Transverse colon (tissue), 4 donors: ENCODE measurements at regions of chr18 and their contacts with region 1.

Region 1: DNA sequence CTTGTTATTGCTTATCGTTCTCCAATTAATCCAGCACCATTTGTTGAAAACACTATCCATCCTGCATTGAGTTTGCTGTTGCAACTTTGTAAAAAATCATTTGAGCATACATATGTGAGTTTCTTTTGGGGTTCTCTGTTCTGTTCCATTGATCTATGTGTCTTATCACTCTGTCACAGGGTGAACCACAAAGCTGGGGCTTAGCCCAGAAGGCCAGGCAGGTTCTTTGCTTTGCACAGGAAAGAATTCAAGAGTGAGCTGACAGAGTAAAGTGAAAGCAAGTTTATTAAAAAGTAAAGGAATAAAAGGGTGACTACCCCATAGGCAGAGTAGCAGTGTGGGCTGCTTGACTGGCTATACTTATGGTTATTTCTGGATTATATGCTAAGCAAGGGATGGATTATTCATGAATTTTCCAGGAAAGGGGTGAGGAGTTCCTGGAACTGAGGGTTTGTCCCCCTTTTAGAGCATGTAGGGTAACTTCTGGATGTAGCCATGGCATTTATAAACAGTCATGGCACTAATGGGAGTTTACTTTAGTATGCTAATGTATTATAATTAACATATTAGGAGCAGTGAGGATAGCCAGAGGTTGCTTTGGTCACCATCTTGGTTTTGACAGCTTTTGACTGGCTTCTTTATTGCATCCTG is 46.8 kb downstream of the RNF138 start:
- DNase-seq: no peak
- H3K4me3 ChIP-seq: no peak overlapping the region
- H3K27ac ChIP-seq: no peak overlapping the region
- H3K4me1 ChIP-seq: no peaks in the 10 kb centered on the region
- H3K27me3 ChIP-seq: no peaks in the 10 kb centered on the region
- CTCF ChIP-seq: no peak
- EP300 ChIP-seq: no peak
- POLR2A ChIP-seq: no peak

Region 2: GRCh38 chr18:31722369-31722957 is 416.0 kb before region 1 on chr18:
- in situ Hi-C with region 1: loop called in 1 of 4 experiments (anchors 25 kb)
- intact Hi-C with region 1: no loop called
- DNase-seq: peak; percentile 86
- H3K4me3 ChIP-seq: no peak overlapping the region
- H3K27ac ChIP-seq: no peak overlapping the region
- H3K4me1 ChIP-seq: peaks cover 0 to 9% (median 4%) of the 10 kb centered on the region in 4 donors
- H3K27me3 ChIP-seq: peaks cover 4% of the 10 kb centered on the region
- CTCF ChIP-seq: peak; percentile 74 to 90 (median 75)
- EP300 ChIP-seq: no peak
- POLR2A ChIP-seq: no peak

Region 3: DNA sequence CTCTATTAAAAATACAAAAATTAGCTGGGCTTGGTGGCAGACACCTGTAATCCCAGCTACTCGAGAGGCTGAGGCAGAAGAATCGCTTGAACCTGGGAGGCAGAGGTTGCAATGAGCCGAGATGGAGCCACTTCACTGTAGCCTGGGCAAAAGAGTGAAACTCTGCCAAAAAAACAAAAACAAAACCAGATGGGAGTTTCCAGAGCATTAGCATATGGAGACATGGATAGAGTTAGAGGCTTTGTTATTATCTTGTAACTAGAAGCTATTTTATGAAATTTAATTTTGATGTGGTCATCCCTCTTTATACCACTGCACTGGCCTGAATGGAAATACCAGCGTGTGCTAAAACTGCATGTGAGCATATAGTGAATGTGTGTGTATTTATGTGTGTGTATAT is 254.4 kb before region 1 on chr18:
- in situ Hi-C with region 1: no loop called
- intact Hi-C with region 1: no loop called
- DNase-seq: no peak
- H3K4me3 ChIP-seq: no peak overlapping the region
- H3K27ac ChIP-seq: no peak overlapping the region
- H3K4me1 ChIP-seq: no peaks in the 10 kb centered on the region
- H3K27me3 ChIP-seq: no peaks in the 10 kb centered on the region
- CTCF ChIP-seq: no peak
- EP300 ChIP-seq: no peak
- POLR2A ChIP-seq: no peak

Region 4: GRCh38 chr18:32114293-32114942 is 24.0 kb before region 1 on chr18:
- in situ Hi-C with region 1: no loop called
- intact Hi-C with region 1: no loop called
- DNase-seq: no peak
- H3K4me3 ChIP-seq: no peak overlapping the region
- H3K27ac ChIP-seq: no peak overlapping the region
- H3K4me1 ChIP-seq: no peaks in the 10 kb centered on the region
- H3K27me3 ChIP-seq: no peaks in the 10 kb centered on the region
- CTCF ChIP-seq: no peak
- EP300 ChIP-seq: no peak
- POLR2A ChIP-seq: no peak

Region 5: DNA sequence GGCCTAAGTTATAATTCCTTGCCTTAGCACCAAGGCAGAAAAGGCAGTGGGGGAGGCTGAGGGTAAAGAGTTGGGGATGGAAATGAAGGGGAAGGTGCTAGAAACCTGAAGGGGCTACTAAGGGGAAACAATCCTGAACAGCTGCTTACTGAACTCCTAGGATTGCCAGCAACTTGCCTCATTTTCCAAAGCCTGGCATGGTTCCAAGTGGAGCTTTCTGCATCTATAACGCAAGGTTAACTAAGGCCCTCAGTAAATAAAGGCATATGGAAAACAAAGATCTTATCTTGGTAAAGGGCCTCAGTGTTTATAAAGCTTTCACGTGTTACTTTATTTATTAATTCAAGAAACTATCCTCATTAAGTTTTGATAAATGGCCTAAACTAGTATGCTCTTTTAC is 62.3 kb after region 1 on chr18:
- in situ Hi-C with region 1: no loop called
- intact Hi-C with region 1: no loop called
- DNase-seq: peak; percentile 17
- H3K4me3 ChIP-seq: no peak overlapping the region
- H3K27ac ChIP-seq: peak overlapping the region in 3 of 4 donors; percentile 45 to 73 (median 68)
- H3K4me1 ChIP-seq: peaks cover 0 to 21% (median 12%) of the 10 kb centered on the region in 4 donors
- H3K27me3 ChIP-seq: no peaks in the 10 kb centered on the region
- CTCF ChIP-seq: no peak
- EP300 ChIP-seq: no peak
- POLR2A ChIP-seq: no peak